ENCODE measurements at regions of chr2 and their contacts with region 1.

Region 1: DNA sequence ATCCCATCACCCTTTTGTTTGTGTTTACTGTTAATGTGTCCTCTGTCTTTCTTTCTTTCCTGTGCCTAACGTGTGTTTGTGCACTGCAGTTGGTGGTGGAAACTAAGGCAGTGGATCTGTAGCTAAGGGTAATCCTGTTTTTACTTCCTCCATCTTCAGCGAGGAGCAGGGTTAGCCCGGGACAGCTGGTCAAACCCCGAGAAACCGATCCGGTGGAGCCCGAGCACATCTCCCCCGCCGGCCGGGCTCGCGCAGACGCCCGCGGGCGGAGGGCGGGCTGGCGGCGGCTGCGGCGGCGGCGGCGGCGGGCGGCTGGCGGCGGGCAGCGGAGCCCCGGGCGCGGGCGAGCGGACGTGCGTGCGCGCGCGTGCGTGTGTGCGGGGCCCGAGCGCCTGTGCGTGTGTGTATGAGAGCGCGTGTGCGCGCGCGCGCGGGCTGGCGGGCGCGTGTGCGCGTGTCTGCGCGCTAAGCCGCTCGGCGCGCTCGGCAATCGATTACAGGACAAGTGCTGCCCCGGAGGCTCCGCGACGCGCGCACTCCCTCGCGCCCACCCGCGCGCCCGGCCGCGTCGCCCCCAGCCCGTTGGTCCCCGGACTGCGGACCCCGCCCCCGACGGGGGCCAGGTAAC is at the start of gene IKZF2:
- DNase-seq: peak; percentile 64
- H3K4me3 Mint-ChIP-seq: peak within 1 kb of the TSS; percentile 86
- H3K27ac Mint-ChIP-seq: peak within 1 kb of the TSS; percentile 84
- H3K4me1 Mint-ChIP-seq: peaks cover 37% of the 10 kb centered on the region
- H3K27me3 Mint-ChIP-seq: peaks cover 60% of the 10 kb centered on the region
- total RNA-seq, gene IKZF2: 13.4 and 17.2 TPM in 2 replicates

Region 2: GRCh38 chr2:212777020-212777491 is 374.5 kb before region 1 on chr2:
- intact Hi-C with region 1: loop called (anchors 1 kb)
- DNase-seq: no peak
- H3K4me3 Mint-ChIP-seq: no peak overlapping the region
- H3K27ac Mint-ChIP-seq: no peak overlapping the region
- H3K4me1 Mint-ChIP-seq: peaks cover 6% of the 10 kb centered on the region
- H3K27me3 Mint-ChIP-seq: no peaks in the 10 kb centered on the region

Region 3: GRCh38 chr2:212915121-212915782 is 236.3 kb before region 1 on chr2:
- intact Hi-C with region 1: loop called (anchors 2 kb)
- DNase-seq: no peak
- H3K4me3 Mint-ChIP-seq: peak overlapping the region; percentile 11
- H3K27ac Mint-ChIP-seq: peak overlapping the region; percentile 54
- H3K4me1 Mint-ChIP-seq: peaks cover 30% of the 10 kb centered on the region
- H3K27me3 Mint-ChIP-seq: peaks cover 6% of the 10 kb centered on the region

Region 4: DNA sequence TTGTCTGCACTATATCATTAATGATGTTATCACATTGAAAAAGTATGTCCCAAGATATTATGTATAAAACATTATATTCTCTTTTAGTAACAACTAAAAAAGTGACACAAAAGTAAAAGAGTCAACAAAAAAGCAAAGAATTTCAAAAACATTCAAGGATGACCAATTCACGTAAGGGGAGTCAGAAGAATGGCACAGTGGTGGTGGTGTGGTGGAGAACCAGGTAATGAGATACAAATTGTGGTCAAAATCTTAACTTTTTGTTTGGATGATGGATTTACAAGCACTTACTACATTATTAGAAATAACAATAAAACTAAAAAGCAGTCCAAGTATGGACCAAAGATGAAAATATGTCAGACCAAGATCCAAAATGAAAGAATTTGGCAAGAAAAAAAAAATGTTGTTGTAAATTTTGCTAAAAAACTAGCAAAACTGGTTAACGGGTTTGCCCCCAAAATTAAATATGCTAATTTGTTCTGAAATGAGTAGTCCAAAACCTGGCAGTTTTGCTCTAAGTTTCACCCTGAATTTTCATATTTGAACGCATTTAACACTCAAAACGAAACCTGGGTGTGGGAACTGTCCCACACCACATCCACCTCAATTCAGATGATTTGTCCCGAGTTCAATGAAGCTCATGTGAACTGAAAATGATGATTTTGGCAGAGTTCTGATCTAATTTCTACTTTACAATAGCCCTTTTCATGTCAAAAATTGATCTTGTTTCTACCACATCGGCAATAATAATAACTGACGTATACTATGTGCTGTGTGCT is 136.0 kb before region 1 on chr2:
- intact Hi-C with region 1: loop called (anchors 1 kb)
- DNase-seq: peak; percentile 51
- H3K4me3 Mint-ChIP-seq: no peak overlapping the region
- H3K27ac Mint-ChIP-seq: peak overlapping the region; percentile 33
- H3K4me1 Mint-ChIP-seq: peaks cover 44% of the 10 kb centered on the region
- H3K27me3 Mint-ChIP-seq: peaks cover 27% of the 10 kb centered on the region

Region 5: DNA sequence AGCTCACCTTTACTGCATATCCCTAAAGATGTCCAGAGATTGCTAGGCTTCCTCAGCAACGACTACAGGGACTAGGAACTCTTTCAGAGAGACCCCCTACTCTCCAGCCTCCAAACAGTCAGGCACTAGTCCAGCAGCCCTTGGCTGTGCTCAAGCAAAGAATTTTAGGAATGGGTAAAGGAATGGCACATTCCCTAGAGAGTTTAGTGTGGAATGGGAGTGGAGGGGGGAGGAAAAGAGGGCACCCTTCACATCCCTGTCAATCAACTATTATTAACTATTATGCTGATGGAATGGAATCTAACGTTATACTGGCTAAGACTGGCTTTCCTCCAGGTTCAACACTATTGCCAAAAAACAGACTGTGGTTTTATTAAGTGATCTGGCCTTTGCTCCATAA is 65.0 kb before region 1 on chr2:
- intact Hi-C with region 1: no loop called
- DNase-seq: no peak
- H3K4me3 Mint-ChIP-seq: no peak overlapping the region
- H3K27ac Mint-ChIP-seq: no peak overlapping the region
- H3K4me1 Mint-ChIP-seq: peaks cover 2% of the 10 kb centered on the region
- H3K27me3 Mint-ChIP-seq: peaks cover 5% of the 10 kb centered on the region

Region 6: GRCh38 chr2:213104092-213104902 is 47.3 kb before region 1 on chr2:
- intact Hi-C with region 1: loop called (anchors 5 kb)
- DNase-seq: no peak
- H3K4me3 Mint-ChIP-seq: peak overlapping the region; percentile 47
- H3K27ac Mint-ChIP-seq: peak overlapping the region; percentile 16
- H3K4me1 Mint-ChIP-seq: peaks cover 31% of the 10 kb centered on the region
- H3K27me3 Mint-ChIP-seq: peaks cover 7% of the 10 kb centered on the region

Region 7: DNA sequence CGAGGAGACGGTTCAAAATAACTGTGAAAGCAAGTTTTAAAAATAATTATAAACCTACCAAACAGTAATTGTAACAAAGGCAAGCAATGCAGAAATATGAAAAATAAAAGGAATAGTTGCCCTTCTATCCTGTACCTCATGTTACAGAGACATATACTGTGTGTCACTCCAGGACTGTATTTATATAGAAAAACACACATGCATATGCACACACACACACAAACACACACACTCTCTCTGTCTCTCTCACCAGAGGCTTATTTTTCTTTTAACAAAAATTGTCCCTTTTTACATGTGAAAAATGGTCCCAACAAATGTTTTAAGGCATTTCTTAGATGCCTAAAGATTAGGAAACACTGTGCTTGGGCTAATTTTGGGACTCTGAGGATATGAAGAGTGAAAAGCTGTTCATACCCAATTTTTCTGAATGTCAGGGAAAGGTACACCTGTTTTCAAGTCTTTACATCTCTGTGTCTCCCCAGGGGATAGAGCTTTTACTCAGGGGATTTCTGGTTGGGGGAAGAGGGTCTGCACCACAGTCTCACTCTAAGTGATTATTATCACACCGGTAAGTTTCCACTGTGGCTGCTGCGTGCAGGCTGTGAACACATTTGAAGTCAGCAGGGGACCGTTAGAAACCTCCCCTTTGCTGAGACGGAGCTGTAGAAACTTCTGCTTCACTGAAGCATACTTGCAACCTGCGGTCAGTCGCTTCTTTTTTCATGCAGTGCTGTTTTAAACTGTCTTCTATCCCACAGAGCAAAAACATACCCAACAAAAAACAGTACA is 81.3 kb after region 1 on chr2:
- intact Hi-C with region 1: loop called (anchors 5 kb)
- DNase-seq: peak; percentile 45
- H3K4me3 Mint-ChIP-seq: peak overlapping the region; percentile 1
- H3K27ac Mint-ChIP-seq: peak overlapping the region; percentile 5
- H3K4me1 Mint-ChIP-seq: peaks cover 22% of the 10 kb centered on the region
- H3K27me3 Mint-ChIP-seq: peaks cover 19% of the 10 kb centered on the region